Activated T-helper 1 cell treated with anti-CD3 and anti-CD28 coated beads, Interleukin-12 subunit alpha, Interleukin-12 subunit beta, Interleukin-2, Interleukin-4 antibody, amounts not matched to agents 30 ng/mL and 10 ng/mL and 1 ng/mL, durations not matched to agents 14 hours and 24 hours and 36 hours (primary cell): ENCODE measurements at regions of chr13 and their contacts with region 1.

Region 1: GRCh38 chr13:19766213-19766990 is 16.3 kb downstream of the PSPC1 start:
- DNase-seq: no peak
- H3K4me3 Mint-ChIP-seq: no peak overlapping the region
- H3K27ac Mint-ChIP-seq: no peak overlapping the region
- H3K4me1 Mint-ChIP-seq: peaks cover 44% of the 10 kb centered on the region
- H3K27me3 Mint-ChIP-seq: no peaks in the 10 kb centered on the region

Region 2: GRCh38 chr13:19713186-19713965 is 53.0 kb before region 1 on chr13:
- intact Hi-C with region 1: loop called (anchors 10 kb)
- DNase-seq: no peak
- H3K4me3 Mint-ChIP-seq: no peak overlapping the region
- H3K27ac Mint-ChIP-seq: peak overlapping the region; percentile 61
- H3K4me1 Mint-ChIP-seq: peaks cover 21% of the 10 kb centered on the region
- H3K27me3 Mint-ChIP-seq: no peaks in the 10 kb centered on the region

Region 3: GRCh38 chr13:19742643-19743042 is 23.8 kb before region 1 on chr13:
- intact Hi-C with region 1: no loop called
- DNase-seq: no peak
- H3K4me3 Mint-ChIP-seq: no peak overlapping the region
- H3K27ac Mint-ChIP-seq: no peak overlapping the region
- H3K4me1 Mint-ChIP-seq: peaks cover 9% of the 10 kb centered on the region
- H3K27me3 Mint-ChIP-seq: no peaks in the 10 kb centered on the region